Sigmoid colon (tissue), 7 donors: ENCODE measurements at regions of chr1 and their contacts with region 1.

Region 1: DNA sequence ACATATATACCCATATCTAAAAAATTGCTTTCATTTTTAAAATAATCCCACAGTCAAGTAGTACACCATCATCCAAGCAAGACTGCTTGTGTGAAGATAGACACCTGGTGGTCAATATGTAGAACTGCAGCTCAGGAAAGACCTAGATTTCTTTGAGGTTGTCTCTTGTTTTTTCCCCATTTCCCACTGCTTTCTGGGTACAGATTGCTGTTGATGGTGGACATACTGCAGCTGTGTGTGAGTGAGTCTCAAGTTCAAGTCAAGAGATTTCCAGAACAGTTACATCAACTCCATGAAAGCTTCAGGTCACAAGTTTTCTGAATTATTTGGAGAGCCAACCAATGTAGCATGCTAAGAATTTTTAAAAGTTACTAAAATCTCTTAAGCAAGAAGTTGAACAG is 306.4 kb downstream of the DUSP10 start:
- DNase-seq: no peak
- H3K4me3 ChIP-seq: no peak overlapping the region
- H3K27ac ChIP-seq: peak overlapping the region in 3 of 4 donors; percentile 1 to 32 (median 24)
- H3K4me1 ChIP-seq: peaks cover 0 to 47% (median 31%) of the 10 kb centered on the region in 4 donors
- H3K27me3 ChIP-seq: no peaks in the 10 kb centered on the region
- CTCF ChIP-seq: peak; percentile 84 to 93 (median 90)
- EP300 ChIP-seq: no peak
- POLR2A ChIP-seq: no peak

Region 2: DNA sequence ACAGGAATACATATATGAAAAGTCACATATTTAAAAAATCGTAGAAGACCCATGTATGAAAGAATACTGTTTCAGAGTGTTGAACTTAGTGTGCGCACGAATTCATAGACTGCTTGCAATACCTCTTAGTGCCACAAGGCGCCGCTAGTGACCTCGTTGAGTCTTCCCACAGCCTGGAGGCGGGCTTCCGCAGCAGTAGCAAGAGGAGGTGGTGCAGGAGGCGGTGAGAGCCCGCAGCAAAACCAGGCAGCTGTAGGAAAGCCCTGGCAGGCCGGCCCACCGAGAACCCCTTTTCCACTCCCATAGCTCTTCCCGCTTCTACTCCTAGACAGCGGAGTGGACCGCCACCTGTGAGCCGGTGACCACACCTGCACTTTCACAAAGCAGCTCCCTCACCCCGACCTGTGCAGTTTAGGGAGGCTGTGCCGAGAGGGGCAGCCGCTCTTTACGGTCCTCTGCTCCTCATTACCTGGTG is 625.3 kb before region 1 on chr1:
- intact Hi-C with region 1: loop called (anchors 5 kb)
- DNase-seq: peak; percentile 95
- H3K4me3 ChIP-seq: peak overlapping the region in 3 of 4 donors; percentile 10 to 25 (median 16)
- H3K27ac ChIP-seq: peak overlapping the region in 3 of 4 donors; percentile 46 to 77 (median 58)
- H3K4me1 ChIP-seq: peaks cover 0 to 64% (median 60%) of the 10 kb centered on the region in 4 donors
- H3K27me3 ChIP-seq: no peaks in the 10 kb centered on the region
- CTCF ChIP-seq: peak; percentile 77 to 97 (median 95)
- EP300 ChIP-seq: no peak
- POLR2A ChIP-seq: no peak

Region 3: DNA sequence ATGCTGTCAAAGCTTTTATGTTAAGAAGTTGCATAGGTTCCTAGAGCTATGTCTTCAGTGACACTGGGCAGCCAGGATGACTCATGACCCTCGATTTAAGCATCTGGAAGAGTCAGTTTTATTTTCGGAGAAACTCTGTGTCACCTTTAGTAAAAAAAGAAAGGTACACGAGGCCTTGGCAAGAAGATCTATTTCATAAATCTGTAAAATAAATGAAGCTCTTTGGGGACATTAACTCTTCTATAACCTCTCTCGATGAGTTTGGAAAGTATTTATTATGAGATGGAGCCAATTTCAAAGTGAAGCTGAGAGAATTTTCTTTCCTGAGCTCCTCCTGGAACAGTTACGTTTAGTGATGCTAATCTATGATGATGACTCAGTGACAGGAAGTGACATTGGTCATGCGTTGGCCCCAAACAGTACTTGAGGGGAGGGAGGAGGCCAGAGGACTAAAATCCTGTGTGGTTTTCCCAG is 399.8 kb before region 1 on chr1:
- intact Hi-C with region 1: loop called (anchors 5 kb)
- DNase-seq: no peak
- H3K4me3 ChIP-seq: no peak overlapping the region
- H3K27ac ChIP-seq: peak overlapping the region in 2 of 4 donors; percentile 33 to 38
- H3K4me1 ChIP-seq: peaks cover 0 to 47% (median 39%) of the 10 kb centered on the region in 4 donors
- H3K27me3 ChIP-seq: no peaks in the 10 kb centered on the region
- CTCF ChIP-seq: no peak
- EP300 ChIP-seq: no peak
- POLR2A ChIP-seq: no peak

Region 4: DNA sequence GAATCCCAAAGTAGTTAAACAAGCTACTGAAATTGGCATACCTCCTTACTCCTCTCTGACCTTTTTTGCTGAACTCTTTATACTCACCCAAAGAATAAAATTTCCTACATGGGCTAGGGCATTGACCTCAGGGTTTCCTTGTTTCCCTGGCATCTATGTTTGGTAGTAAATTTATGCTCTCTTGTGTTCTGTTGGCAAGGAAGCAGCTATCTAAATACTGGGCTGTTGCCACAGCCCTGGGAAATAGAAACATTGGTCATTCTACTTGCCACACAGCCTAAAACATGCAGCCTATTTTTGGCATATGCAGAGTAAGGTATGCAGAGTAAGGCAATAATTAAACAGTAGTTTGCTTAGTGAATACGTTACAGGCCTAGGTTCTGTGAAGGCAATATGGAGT is 204.9 kb before region 1 on chr1:
- intact Hi-C with region 1: loop called (anchors 10 kb)
- DNase-seq: peak; percentile 73
- H3K4me3 ChIP-seq: no peak overlapping the region
- H3K27ac ChIP-seq: peak overlapping the region; percentile 1 to 63 (median 49)
- H3K4me1 ChIP-seq: peaks cover 0 to 54% (median 34%) of the 10 kb centered on the region in 4 donors
- H3K27me3 ChIP-seq: no peaks in the 10 kb centered on the region
- CTCF ChIP-seq: no peak
- EP300 ChIP-seq: peak in 1 of 4 donors; percentile 53
- POLR2A ChIP-seq: no peak

Region 5: DNA sequence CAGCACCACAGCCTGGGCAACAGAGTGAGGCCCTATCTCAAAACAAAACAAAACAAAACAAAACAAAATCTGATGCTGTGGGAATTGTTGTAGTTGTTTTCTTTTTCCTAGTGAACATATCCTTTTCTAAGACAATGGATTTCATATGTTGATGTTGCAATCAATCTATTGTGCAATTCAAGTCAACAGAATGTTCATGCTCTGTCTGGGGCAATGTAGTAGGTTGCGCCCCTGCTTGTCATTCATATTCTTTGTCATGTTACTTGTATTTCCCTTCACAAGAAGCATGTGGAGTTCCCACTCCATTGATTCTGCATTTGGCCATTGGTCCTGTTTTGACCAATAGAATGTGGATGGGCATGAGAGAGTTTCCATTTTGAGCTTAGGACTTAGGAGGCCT is 82.5 kb after region 1 on chr1:
- intact Hi-C with region 1: no loop called
- DNase-seq: no peak
- H3K4me3 ChIP-seq: no peak overlapping the region
- H3K27ac ChIP-seq: no peak overlapping the region
- H3K4me1 ChIP-seq: no peaks in the 10 kb centered on the region
- H3K27me3 ChIP-seq: no peaks in the 10 kb centered on the region
- CTCF ChIP-seq: no peak
- EP300 ChIP-seq: no peak
- POLR2A ChIP-seq: no peak

Region 6: GRCh38 chr1:221708987-221709386 is 273.5 kb after region 1 on chr1:
- intact Hi-C with region 1: loop called (anchors 10 kb)
- DNase-seq: peak; percentile 85
- H3K4me3 ChIP-seq: no peak overlapping the region
- H3K27ac ChIP-seq: peak overlapping the region; percentile 74 to 89 (median 81)
- H3K4me1 ChIP-seq: peaks cover 0 to 98% (median 85%) of the 10 kb centered on the region in 4 donors
- H3K27me3 ChIP-seq: no peaks in the 10 kb centered on the region
- CTCF ChIP-seq: no peak
- EP300 ChIP-seq: peak in 3 of 4 donors; percentile 53 to 93 (median 89)
- POLR2A ChIP-seq: no peak